Prostate gland (tissue), 2 donors: ENCODE measurements at regions of chr20 and their contacts with region 1.

Region 1: GRCh38 chr20:5788385-5788895 is 38.2 kb downstream of the SHLD1 start:
- DNase-seq: peak; percentile 89
- H3K4me3 ChIP-seq: no peak overlapping the region
- H3K27ac ChIP-seq: no peak overlapping the region
- H3K4me1 ChIP-seq: peaks cover 2% of the 10 kb centered on the region
- H3K27me3 ChIP-seq: no peaks in the 10 kb centered on the region
- CTCF ChIP-seq: peak; percentile 74 to 95 (median 92)
- POLR2A ChIP-seq: no peak

Region 2: DNA sequence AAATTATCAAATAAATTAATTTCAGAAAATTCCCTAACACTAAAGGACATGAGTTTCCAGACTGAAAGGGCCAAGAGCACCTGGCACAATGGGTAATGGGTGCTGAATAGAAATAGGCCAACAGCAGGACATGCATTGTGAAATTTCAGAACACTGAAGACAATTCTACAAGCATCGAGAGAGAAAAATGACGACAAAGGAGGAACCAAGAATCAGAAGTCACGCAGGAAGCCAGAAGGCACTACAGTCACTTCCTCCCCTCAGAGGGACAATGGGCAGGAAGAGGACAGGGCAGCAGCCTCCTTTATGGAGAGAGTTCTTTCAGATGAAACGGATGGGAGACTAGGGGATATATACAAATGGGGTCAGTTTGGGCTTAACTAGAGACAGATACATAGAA is 698.2 kb before region 1 on chr20:
- intact Hi-C with region 1: no loop called
- DNase-seq: no peak
- H3K4me3 ChIP-seq: no peak overlapping the region
- H3K27ac ChIP-seq: no peak overlapping the region
- H3K4me1 ChIP-seq: no peaks in the 10 kb centered on the region
- H3K27me3 ChIP-seq: no peaks in the 10 kb centered on the region
- CTCF ChIP-seq: no peak
- POLR2A ChIP-seq: no peak

Region 3: GRCh38 chr20:5529331-5530148 is 258.9 kb before region 1 on chr20:
- intact Hi-C with region 1: loop called (anchors 5 kb)
- DNase-seq: peak; percentile 76
- H3K4me3 ChIP-seq: no peak overlapping the region
- H3K27ac ChIP-seq: no peak overlapping the region
- H3K4me1 ChIP-seq: no peaks in the 10 kb centered on the region
- H3K27me3 ChIP-seq: no peaks in the 10 kb centered on the region
- CTCF ChIP-seq: peak; percentile 46 to 76 (median 56)
- POLR2A ChIP-seq: no peak

Region 4: DNA sequence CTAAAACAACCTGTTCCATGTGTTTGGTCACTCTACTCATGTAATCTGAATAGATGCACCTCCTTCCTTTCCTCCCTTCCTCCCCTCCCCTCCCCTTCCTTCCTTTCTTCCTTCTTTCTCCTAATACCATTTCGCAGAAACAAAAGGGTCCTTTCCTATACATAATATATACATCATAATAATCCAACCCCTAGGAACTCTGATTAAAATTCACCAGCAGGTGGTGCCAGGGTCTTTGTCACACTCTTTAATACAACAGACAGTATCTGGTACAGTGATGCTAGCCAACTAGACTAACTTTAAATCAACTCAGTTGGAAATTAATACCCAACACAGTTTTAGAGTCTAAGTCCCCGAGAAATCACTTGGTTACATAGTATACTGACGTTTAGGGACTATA is 219.4 kb before region 1 on chr20:
- intact Hi-C with region 1: loop called (anchors 5 kb)
- DNase-seq: peak; percentile 58
- H3K4me3 ChIP-seq: no peak overlapping the region
- H3K27ac ChIP-seq: no peak overlapping the region
- H3K4me1 ChIP-seq: no peaks in the 10 kb centered on the region
- H3K27me3 ChIP-seq: no peaks in the 10 kb centered on the region
- CTCF ChIP-seq: peak in 3 of 4 experiments; percentile 43 to 75 (median 72)
- POLR2A ChIP-seq: no peak

Region 5: GRCh38 chr20:5731753-5732366 is 56.6 kb before region 1 on chr20:
- intact Hi-C with region 1: loop called (anchors 2 kb)
- DNase-seq: peak; percentile 22
- H3K4me3 ChIP-seq: no peak overlapping the region
- H3K27ac ChIP-seq: peak overlapping the region; percentile 9 to 41
- H3K4me1 ChIP-seq: no peaks in the 10 kb centered on the region
- H3K27me3 ChIP-seq: no peaks in the 10 kb centered on the region
- CTCF ChIP-seq: no peak
- POLR2A ChIP-seq: no peak

Region 6: DNA sequence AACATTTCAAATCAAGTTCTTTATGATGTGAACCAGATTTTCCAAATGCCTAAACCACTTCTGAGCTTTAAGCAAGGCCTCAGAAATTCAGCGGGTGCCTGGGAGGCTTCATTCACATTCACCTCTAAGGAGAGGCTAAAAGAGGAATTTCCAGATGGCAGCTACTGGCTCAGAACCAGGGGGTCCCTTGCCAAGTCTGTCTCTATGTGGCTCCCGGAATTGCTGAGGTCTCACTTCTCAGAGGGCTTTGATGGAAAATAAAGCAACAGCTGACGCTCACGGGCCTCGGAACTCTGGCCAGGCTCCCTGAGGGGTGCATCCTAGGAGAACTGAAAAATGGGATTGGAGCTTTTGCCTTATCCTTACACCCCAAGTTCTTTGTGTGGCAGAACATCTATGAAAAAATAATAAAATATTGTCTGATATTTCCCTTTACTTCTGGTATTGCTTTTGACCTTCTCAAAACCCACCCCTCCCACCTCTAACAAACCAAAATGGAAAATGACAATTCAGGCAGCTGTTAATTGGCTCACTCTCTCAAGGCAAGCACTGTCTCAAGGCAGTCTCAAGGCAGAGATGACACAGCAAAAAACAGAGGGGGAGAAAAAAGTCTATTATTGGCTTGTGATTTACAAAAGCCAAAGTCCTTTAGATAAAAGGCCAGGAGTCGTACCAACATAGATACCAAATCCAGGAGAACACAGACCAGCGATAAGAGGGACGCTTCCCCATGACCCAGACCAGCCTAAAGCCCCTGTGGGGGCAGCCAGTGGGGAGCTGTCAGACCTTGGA is 287.2 kb after region 1 on chr20:
- intact Hi-C with region 1: loop called (anchors 5 kb)
- DNase-seq: no peak
- H3K4me3 ChIP-seq: no peak overlapping the region
- H3K27ac ChIP-seq: no peak overlapping the region
- H3K4me1 ChIP-seq: no peaks in the 10 kb centered on the region
- H3K27me3 ChIP-seq: no peaks in the 10 kb centered on the region
- CTCF ChIP-seq: no peak
- POLR2A ChIP-seq: no peak

Region 7: DNA sequence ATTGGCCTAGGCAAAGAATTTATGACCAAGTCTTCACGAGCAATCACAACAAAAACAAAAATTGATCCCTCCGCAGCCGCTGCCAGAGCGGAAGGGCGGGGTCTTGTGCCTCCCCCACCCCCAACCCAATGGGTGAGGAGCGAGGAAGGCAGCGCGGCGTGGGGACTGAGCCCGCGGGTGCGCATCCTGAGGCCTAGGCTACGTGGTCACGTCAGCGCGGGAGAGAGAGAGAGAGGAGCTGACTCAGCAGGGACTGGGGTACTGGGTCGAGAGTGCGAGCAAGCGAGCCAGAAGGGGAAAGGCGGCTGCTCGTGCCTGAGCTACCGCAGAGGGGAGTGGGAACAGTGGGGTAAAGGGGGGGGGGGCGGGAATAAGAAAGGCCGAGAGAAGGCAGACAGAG is 424.5 kb after region 1 on chr20:
- intact Hi-C with region 1: no loop called
- DNase-seq: no peak
- H3K4me3 ChIP-seq: no peak overlapping the region
- H3K27ac ChIP-seq: no peak overlapping the region
- H3K4me1 ChIP-seq: no peaks in the 10 kb centered on the region
- H3K27me3 ChIP-seq: no peaks in the 10 kb centered on the region
- CTCF ChIP-seq: no peak
- POLR2A ChIP-seq: no peak